H1 (cell line): ENCODE measurements at regions of chr12 and their contacts with region 1.

Region 1: DNA sequence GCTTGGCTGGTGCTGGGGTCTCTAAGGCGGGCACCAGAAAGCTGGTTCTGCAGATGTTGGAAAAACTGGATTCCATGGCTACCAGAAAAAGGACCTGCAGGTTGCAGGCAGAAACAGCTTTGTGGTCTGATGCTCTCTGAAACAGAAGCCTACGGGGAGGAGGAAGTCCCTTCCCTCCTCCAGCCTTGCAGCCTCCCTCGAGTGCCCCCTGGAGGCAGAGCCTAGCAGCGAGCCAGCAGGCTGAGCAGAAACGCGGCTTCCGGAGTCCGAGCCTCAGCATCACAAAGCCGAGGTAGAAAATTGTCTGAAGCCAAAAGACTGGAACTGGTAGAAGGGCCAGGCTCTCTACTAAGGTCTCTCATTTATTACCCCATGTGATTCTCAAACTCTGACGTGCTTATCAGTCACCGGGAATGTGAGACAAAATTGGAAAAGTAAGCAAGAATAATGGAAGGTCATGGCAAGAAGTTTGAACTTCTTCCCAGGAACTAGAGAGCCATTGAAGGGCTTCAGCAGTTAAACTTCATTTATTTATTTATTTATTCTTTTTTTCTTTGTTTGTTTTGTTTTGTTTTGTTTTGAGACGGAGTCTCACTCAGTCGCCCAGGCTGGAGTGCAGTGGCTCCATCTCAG is 82.2 kb upstream of the CPSF6 start:
- DNase-seq: peak; percentile 77 to 97
- H3K4me3 ChIP-seq: no peak overlapping the region
- H3K27ac ChIP-seq: no peak overlapping the region
- H3K4me1 ChIP-seq: peaks cover 0 to 2% (median under 1%) of the 10 kb centered on the region in 4 experiments; a peak in 1 of 7 replicates
- H3K27me3 ChIP-seq: no peaks in the 10 kb centered on the region
- CTCF ChIP-seq: peak; percentile 93 to 99 (median 95)
- EP300 ChIP-seq: no peak
- POLR2A ChIP-seq: 0 out of 3 replicates have a peak, but pooled peaks of 1 of the 2 experiments have one; percentile 46
- RAD21 ChIP-seq: peak; percentile 73 to 79

Region 2: DNA sequence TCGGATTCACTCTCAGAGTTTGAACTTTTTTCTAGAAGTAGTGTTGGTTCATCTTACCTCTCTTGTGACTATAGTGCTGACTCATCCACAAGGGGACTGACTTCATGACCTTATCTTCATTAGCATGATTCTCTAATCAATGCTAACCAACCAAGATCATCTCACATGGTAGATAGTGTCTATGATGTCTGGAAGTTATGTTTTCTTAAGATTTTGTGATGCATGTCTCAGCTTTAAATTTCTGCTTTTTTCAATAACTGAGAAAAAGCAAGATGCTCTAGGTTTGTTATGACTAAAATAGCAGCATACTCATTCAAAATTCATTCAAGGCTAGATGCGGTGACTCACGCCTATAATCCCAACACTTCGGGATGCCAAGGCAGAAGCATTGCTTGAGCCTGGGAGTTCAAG is 423.5 kb before region 1 on chr12:
- CTCF ChIA-PET with region 1: no interaction called
- POLR2A ChIA-PET with region 1: no interaction called
- DNase-seq: no peak
- H3K4me3 ChIP-seq: no peak overlapping the region
- H3K27ac ChIP-seq: no peak overlapping the region
- H3K4me1 ChIP-seq: no peaks in the 10 kb centered on the region
- H3K27me3 ChIP-seq: no peaks in the 10 kb centered on the region
- CTCF ChIP-seq: no peak
- EP300 ChIP-seq: no peak
- POLR2A ChIP-seq: no peak
- RAD21 ChIP-seq: no peak

Region 3: GRCh38 chr12:69000540-69001243 is 156.4 kb before region 1 on chr12:
- CTCF ChIA-PET with region 1: no interaction called
- POLR2A ChIA-PET with region 1: no interaction called
- DNase-seq: no peak
- H3K4me3 ChIP-seq: no peak overlapping the region
- H3K27ac ChIP-seq: no peak overlapping the region
- H3K4me1 ChIP-seq: no peaks in the 10 kb centered on the region
- H3K27me3 ChIP-seq: 0 out of 7 replicates have a peak, but pooled peaks cover 0 to 3% (median 0%) of the 10 kb centered on the region in 4 experiments
- CTCF ChIP-seq: no peak
- EP300 ChIP-seq: no peak
- POLR2A ChIP-seq: no peak
- RAD21 ChIP-seq: no peak

Region 4: DNA sequence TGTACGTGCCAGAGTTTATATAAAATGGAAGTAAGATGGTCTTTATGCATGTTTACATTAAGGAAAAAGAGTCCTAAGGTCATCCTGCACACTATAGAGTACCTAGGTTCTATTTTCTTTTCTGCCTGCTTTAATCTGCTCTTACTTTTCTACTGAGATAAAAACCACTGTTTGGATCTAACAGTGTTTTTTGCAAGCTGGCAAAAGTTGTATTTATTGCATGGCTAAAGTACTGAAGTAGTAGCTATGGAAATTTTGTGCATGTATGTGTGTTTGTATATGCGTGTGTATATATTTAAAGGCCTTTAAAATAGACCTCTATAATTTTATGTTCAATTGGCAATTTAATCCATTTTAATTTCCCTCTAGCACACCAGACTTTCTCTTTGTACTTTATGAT is 16.1 kb before region 1 on chr12:
- CTCF ChIA-PET with region 1: interaction called, 14 read pairs
- POLR2A ChIA-PET with region 1: no interaction called
- DNase-seq: no peak
- H3K4me3 ChIP-seq: no peak overlapping the region
- H3K27ac ChIP-seq: no peak overlapping the region
- H3K4me1 ChIP-seq: no peaks in the 10 kb centered on the region
- H3K27me3 ChIP-seq: no peaks in the 10 kb centered on the region
- CTCF ChIP-seq: no peak
- EP300 ChIP-seq: no peak
- POLR2A ChIP-seq: no peak
- RAD21 ChIP-seq: no peak

Region 5: DNA sequence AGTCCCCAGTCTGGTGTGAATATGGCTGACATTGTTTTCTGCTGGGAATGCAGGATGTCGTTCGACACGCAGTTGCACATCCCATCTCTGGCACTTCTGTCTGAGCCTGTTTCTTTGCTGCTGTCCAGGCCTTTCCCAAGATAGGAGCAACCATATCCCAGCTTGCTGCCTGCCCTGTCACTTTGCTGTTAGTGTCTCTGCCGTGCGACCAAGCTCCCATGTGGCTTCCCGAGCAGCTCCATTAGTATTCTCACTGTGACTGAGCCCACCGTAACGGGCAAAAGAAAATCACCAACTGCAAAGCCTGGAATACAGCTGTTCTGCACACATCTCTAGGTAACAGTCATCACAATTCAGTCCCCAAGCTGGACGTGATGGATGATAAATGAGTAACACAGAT is 16.2 kb after region 1 on chr12:
- CTCF ChIA-PET with region 1: interaction called, 53 read pairs
- POLR2A ChIA-PET with region 1: interaction called, 4 read pairs
- DNase-seq: no peak
- H3K4me3 ChIP-seq: no peak overlapping the region
- H3K27ac ChIP-seq: no peak overlapping the region
- H3K4me1 ChIP-seq: peaks cover under 1 to 3% (median 3%) of the 10 kb centered on the region in 4 experiments
- H3K27me3 ChIP-seq: no peaks in the 10 kb centered on the region
- CTCF ChIP-seq: no peak
- EP300 ChIP-seq: no peak
- POLR2A ChIP-seq: no peak
- RAD21 ChIP-seq: no peak

Region 6: GRCh38 chr12:69254046-69254445 is 96.9 kb after region 1 on chr12:
- CTCF ChIA-PET with region 1: interaction called, 90 read pairs
- POLR2A ChIA-PET with region 1: interaction called, 5 read pairs
- DNase-seq: no peak
- H3K4me3 ChIP-seq: no peak overlapping the region
- H3K27ac ChIP-seq: no peak overlapping the region
- H3K4me1 ChIP-seq: peaks cover 0 to 3% (median 0%) of the 10 kb centered on the region in 4 experiments; a peak in 1 of 7 replicates
- H3K27me3 ChIP-seq: no peaks in the 10 kb centered on the region
- CTCF ChIP-seq: peak in 2 of 3 experiments; percentile 46 to 59; a peak in 2 of 4 replicates
- EP300 ChIP-seq: no peak
- POLR2A ChIP-seq: no peak
- RAD21 ChIP-seq: peak; percentile 70 to 72